Gastrocnemius medialis (tissue), 4 donors: ENCODE measurements at regions of chr17 and their contacts with region 1.

Region 1: DNA sequence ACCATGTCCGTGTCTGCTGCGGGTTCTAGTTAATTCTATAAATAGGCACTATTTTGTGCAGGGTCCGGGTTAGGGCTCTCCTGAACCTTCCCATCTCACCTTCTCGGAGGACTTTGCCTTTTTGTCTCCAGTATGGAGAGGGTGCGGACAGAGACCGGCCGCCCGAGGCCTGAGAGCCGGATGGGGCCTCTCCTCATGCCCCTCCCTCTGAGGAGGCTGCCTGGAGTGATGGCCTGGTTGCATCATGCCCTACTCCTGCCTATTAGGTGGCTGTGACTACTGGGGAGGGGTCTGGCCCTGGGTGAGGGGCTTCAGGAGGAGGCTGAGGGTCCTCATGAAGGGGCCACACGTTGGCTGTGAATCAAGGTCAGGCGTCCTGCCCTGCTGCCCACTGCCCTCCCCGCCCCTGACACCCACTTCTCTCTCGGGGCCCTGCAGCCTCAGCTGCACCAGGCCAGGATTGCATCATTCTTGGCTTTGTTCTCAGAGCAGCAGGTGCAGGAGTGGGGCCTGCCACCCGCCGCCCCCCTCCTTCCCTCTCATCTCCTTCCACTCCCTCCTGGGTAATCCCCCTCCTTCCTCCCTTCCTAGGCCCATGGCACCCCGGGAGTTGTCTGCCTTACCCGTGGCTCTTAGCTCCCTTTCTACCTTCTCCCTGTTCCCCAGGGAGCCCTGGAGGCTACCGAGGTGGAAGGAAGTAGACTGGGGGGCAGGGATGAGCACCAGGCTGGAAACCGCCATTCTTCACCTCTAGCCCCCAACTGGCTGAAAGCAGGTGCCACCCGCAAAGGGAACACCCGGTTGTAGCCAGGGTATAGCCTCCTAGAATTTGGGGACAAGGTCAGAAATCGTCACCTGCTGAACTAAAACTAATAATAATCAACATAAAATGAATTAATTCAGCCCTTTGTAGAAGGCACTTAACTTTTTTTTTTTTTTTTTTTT is 12.7 kb upstream of the ARHGAP23 start:
- DNase-seq: peak in 1 of 2 donors; percentile 55
- ATAC-seq: peak; percentile 59 to 85
- H3K4me3 ChIP-seq: peak overlapping the region; percentile 23 to 40 (median 26)
- H3K27ac ChIP-seq: peak overlapping the region in 3 of 4 donors; percentile 39 to 69 (median 60)
- H3K4me1 ChIP-seq: peaks cover 7 to 21% of the 10 kb centered on the region in 2 donors
- H3K27me3 ChIP-seq: peaks cover 9 to 13% (median 10%) of the 10 kb centered on the region in 3 donors
- CTCF ChIP-seq: no peak
- POLR2A ChIP-seq: no peak

Region 2: GRCh38 chr17:38341035-38341721 is 74.3 kb before region 1 on chr17:
- in situ Hi-C with region 1: loop called (anchors 5 kb)
- intact Hi-C with region 1: no loop called
- DNase-seq: no peak
- ATAC-seq: no peak
- H3K4me3 ChIP-seq: no peak overlapping the region
- H3K27ac ChIP-seq: no peak overlapping the region
- H3K4me1 ChIP-seq: no peaks in the 10 kb centered on the region
- H3K27me3 ChIP-seq: no peaks in the 10 kb centered on the region
- CTCF ChIP-seq: no peak
- POLR2A ChIP-seq: no peak